CD8-positive, alpha-beta memory T cell (primary cell): ENCODE measurements at regions of chr11 and their contacts with region 1.

Region 1: DNA sequence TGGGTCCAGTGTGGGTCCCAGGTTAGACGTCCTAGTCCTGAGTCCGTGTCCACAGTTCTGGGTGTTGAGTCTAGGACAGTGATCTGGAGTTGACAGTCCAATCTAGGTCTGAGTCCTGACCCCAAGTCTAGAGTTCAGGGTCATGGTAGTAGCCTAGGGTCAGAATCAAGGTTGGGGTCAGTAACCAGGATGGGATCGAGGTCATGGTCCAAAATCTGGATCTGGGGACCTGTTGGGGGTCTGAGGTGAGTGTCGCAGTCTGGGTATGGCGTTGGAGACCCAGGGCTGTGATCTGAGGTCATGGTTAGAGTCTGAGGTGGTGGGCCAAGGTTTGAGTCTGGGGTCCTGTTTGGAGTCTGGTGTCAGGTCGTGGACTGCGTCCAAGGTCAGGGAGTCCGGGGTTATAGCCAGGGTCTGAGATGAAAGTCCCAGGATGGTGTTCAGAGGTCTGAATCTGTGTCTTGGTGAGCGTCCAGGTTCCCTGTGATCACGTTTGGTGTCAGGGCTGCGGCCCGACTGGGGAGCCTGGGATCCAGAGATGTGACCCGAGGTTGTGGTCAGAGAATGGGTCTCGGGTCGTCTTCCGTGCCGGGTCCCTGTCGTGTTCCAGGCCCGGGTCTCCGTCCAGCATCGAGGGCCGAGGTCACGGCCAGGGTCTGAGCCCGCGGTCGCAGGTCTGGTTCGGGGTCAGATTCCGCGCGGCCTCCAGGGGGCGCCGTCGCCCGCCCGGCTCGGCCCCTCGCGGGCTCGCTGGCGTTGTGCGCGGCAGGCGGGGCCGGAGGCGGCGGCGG is 445 bp upstream of the GRK2 start:
- DNase-seq: peak; percentile 69 to 80 (median 75)
- H3K4me3 ChIP-seq: no peak overlapping the region
- H3K4me3 Mint-ChIP-seq: peak overlapping the region; percentile 80 to 95 (median 85)
- H3K27ac ChIP-seq: peak overlapping the region; percentile 17
- H3K27ac Mint-ChIP-seq: peak overlapping the region; percentile 80 to 93 (median 88)
- H3K4me1 ChIP-seq: peaks cover 63% of the 10 kb centered on the region
- H3K4me1 Mint-ChIP-seq: peaks cover 53 to 82% (median 65%) of the 10 kb centered on the region in 3 donors
- H3K27me3 ChIP-seq: no peaks in the 10 kb centered on the region
- H3K27me3 Mint-ChIP-seq: peaks cover 3 to 8% of the 10 kb centered on the region in 2 donors

Region 2: GRCh38 chr11:66906061-66906735 is 359.6 kb before region 1 on chr11:
- CTCF ChIA-PET with region 1: no interaction called
- POLR2A ChIA-PET with region 1: no interaction called
- DNase-seq: peak in 1 of 5 donors; percentile 25
- H3K4me3 ChIP-seq: no peak overlapping the region
- H3K4me3 Mint-ChIP-seq: no peak overlapping the region
- H3K27ac ChIP-seq: no peak overlapping the region
- H3K27ac Mint-ChIP-seq: peak overlapping the region in 1 of 8 donors; percentile 51
- H3K4me1 ChIP-seq: no peaks in the 10 kb centered on the region
- H3K4me1 Mint-ChIP-seq: no peaks in the 10 kb centered on the region
- H3K27me3 ChIP-seq: no peaks in the 10 kb centered on the region
- H3K27me3 Mint-ChIP-seq: peaks cover 5 to 17% of the 10 kb centered on the region in 2 donors

Region 3: DNA sequence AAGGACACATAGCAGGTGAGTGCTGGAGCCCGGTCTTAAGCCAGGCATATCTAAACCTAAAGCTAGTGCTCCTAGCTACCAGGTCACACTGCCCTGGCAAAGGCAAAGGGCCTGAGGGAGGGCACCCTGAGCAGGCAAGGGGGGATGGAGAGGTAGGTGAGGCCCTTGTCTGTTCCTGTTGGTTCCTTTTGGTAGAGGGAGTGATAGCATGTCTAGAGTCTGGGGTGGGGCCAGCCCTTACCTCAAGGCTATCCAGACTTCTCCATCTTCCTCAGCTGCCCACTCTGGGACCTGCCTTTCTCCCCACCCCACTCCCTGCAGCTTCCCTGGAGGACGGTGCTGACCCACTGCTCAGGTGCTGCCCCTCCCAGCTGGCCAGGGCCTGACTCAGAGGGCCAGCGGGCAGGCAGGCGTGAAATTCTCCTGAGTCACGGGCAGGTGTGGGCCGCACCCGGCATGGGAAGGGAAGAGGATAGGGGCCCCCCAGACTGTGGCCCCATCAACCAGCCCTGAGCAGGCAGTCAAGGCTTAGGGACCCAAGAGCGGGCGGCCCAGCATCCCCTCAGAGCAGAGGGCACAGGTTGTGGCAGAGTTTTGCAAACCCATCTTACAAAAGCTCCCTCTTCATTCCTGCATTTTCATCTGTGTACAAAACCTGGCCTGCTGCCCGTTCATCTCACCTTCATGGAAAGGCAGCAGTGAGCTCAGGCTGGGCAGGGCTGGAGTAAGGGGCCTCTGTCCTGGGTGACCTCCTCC is 203.3 kb before region 1 on chr11:
- CTCF ChIA-PET with region 1: no interaction called
- POLR2A ChIA-PET with region 1: no interaction called
- DNase-seq: no peak
- H3K4me3 ChIP-seq: no peak overlapping the region
- H3K4me3 Mint-ChIP-seq: no peak overlapping the region
- H3K27ac ChIP-seq: no peak overlapping the region
- H3K27ac Mint-ChIP-seq: no peak overlapping the region
- H3K4me1 ChIP-seq: no peaks in the 10 kb centered on the region
- H3K4me1 Mint-ChIP-seq: no peaks in the 10 kb centered on the region
- H3K27me3 ChIP-seq: no peaks in the 10 kb centered on the region
- H3K27me3 Mint-ChIP-seq: peaks cover 0 to 2% of the 10 kb centered on the region in 2 donors

Region 4: DNA sequence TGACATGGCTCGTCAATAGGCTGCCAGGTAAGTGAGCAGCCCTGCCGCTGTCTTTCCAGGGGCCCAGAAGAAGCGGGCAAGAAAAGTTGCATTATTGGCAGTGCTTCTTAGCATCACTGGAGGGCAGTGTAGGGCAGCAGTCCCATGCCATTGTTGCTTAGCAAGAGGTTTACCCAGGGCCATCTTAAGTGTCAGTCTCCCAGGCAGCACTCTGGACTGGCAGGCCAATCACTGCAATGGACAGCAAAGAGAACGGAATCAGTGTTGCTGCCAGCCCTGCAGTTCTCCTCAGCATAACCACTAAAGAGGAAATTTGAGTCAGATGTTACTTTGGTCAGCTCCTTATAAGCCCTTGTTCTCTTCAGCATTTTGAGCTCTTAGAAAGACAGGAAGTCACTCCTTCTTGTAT is 13.0 kb before region 1 on chr11:
- CTCF ChIA-PET with region 1: interaction called, 24 read pairs
- POLR2A ChIA-PET with region 1: no interaction called
- DNase-seq: peak in 1 of 5 donors; percentile 46
- H3K4me3 ChIP-seq: no peak overlapping the region
- H3K4me3 Mint-ChIP-seq: peak overlapping the region in 1 of 7 donors; percentile 41
- H3K27ac ChIP-seq: no peak overlapping the region
- H3K27ac Mint-ChIP-seq: peak overlapping the region in 7 of 8 donors; percentile 11 to 76 (median 67)
- H3K4me1 ChIP-seq: peaks cover 20% of the 10 kb centered on the region
- H3K4me1 Mint-ChIP-seq: peaks cover 13 to 58% (median 34%) of the 10 kb centered on the region in 3 donors
- H3K27me3 ChIP-seq: no peaks in the 10 kb centered on the region
- H3K27me3 Mint-ChIP-seq: peaks cover 0 to 4% of the 10 kb centered on the region in 2 donors

Region 5: GRCh38 chr11:67283481-67283963 is 17.7 kb after region 1 on chr11:
- CTCF ChIA-PET with region 1: interaction called, 114 read pairs
- POLR2A ChIA-PET with region 1: interaction called, 283 read pairs
- DNase-seq: no peak
- H3K4me3 ChIP-seq: no peak overlapping the region
- H3K4me3 Mint-ChIP-seq: no peak overlapping the region
- H3K27ac ChIP-seq: no peak overlapping the region
- H3K27ac Mint-ChIP-seq: peak overlapping the region in 5 of 8 donors; percentile 54 to 97 (median 63)
- H3K4me1 ChIP-seq: peaks cover 72% of the 10 kb centered on the region
- H3K4me1 Mint-ChIP-seq: peaks cover 41 to 60% (median 43%) of the 10 kb centered on the region in 3 donors
- H3K27me3 ChIP-seq: no peaks in the 10 kb centered on the region
- H3K27me3 Mint-ChIP-seq: peaks cover 0 to 2% of the 10 kb centered on the region in 2 donors

Region 6: DNA sequence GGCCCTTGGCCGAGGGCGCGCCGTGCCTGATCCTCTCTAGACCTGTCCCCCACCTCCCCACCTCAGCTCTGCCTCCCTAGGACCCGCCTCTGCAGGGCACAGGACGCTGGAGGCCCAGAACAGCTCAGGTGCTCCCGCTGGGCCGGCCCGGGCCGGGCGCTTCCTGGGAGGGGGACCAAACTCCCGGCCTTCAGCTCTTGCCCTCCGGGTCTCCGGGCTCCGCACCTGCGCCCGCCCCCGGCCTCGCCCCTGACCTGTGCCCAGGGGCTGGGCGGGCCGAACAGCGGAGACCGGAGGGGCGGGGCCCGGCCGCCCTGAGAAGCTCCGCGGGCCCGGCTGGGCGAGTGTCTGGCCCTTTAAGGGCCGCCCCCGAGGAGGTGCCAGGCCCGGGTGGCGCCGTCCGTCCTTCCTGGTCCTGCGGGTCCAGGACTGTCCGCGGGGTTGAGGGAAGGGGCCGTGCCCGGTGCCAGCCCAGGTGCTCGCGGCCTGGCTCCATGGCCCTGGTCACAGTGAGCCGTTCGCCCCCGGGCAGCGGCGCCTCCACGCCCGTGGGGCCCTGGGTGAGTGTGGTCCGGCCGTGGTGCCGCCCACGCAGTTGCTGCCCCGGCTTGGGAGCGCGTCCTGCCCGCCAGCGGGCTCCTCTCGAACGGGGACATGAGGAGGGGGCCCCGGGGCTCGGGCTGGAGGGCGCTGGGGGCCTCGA is 37.5 kb after region 1 on chr11 and contains the start of gene SSH3:
- CTCF ChIA-PET with region 1: interaction called, 10 read pairs
- POLR2A ChIA-PET with region 1: interaction called, 8 read pairs
- DNase-seq: peak in 4 of 5 donors; percentile 24 to 67 (median 43)
- H3K4me3 ChIP-seq: peak within 1 kb of the TSS; percentile 45
- H3K4me3 Mint-ChIP-seq: peak within 1 kb of the TSS; percentile 61 to 86 (median 68)
- H3K27ac ChIP-seq: no peak within 1 kb of the TSS
- H3K27ac Mint-ChIP-seq: peak within 1 kb of the TSS in 7 of 8 donors; percentile 42 to 86 (median 74)
- H3K4me1 ChIP-seq: peaks cover 14% of the 10 kb centered on the region
- H3K4me1 Mint-ChIP-seq: peaks cover 10 to 30% (median 11%) of the 10 kb centered on the region in 3 donors
- H3K27me3 ChIP-seq: no peaks in the 10 kb centered on the region
- H3K27me3 Mint-ChIP-seq: no peaks in the 10 kb centered on the region
- total RNA-seq, gene SSH3: 8.4 to 10.6 TPM

Region 7: DNA sequence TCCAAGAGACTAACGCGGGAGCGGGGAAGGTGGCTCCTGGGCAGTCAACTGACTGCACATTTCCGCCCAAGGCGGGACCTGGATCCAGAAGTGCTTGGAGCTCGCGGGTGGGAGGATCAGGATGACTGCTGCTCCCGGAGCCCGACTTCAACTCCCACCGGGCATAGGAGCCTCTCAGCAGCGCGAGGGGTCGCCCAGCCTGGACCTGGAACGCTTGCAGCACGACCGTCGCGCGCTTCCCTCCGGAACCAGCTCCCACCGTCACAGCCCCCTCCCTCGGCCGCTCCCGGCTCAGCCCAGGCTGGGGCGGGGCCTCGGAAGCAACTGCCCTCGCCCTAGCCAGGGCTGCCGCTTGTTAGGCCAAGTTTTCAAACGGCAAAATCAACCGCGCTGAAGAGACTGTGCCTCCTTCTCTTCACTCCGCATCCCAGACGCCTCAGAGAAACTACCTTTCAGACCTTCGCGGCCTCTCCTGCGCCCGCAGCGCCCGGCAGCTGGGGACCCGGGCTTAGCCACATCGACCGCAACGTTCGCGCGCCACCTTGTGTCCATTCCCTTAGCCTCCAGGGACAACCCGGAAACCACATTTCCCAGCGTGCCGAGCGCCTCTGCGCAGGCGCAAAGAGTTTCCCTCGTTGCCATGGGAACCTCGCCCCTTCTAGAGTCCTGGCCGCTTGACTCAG is 51.5 kb after region 1 on chr11:
- CTCF ChIA-PET with region 1: interaction called, 94 read pairs
- POLR2A ChIA-PET with region 1: interaction called, 24 read pairs
- DNase-seq: peak; percentile 95 to 99 (median 97)
- H3K4me3 ChIP-seq: peak overlapping the region; percentile 93
- H3K4me3 Mint-ChIP-seq: peak overlapping the region; percentile 94 to 100 (median 96)
- H3K27ac ChIP-seq: peak overlapping the region; percentile 82
- H3K27ac Mint-ChIP-seq: peak overlapping the region; percentile 84 to 98 (median 96)
- H3K4me1 ChIP-seq: peaks cover 20% of the 10 kb centered on the region
- H3K4me1 Mint-ChIP-seq: peaks cover 29 to 48% (median 42%) of the 10 kb centered on the region in 3 donors
- H3K27me3 ChIP-seq: no peaks in the 10 kb centered on the region
- H3K27me3 Mint-ChIP-seq: peaks cover 0 to 6% of the 10 kb centered on the region in 2 donors

Region 8: DNA sequence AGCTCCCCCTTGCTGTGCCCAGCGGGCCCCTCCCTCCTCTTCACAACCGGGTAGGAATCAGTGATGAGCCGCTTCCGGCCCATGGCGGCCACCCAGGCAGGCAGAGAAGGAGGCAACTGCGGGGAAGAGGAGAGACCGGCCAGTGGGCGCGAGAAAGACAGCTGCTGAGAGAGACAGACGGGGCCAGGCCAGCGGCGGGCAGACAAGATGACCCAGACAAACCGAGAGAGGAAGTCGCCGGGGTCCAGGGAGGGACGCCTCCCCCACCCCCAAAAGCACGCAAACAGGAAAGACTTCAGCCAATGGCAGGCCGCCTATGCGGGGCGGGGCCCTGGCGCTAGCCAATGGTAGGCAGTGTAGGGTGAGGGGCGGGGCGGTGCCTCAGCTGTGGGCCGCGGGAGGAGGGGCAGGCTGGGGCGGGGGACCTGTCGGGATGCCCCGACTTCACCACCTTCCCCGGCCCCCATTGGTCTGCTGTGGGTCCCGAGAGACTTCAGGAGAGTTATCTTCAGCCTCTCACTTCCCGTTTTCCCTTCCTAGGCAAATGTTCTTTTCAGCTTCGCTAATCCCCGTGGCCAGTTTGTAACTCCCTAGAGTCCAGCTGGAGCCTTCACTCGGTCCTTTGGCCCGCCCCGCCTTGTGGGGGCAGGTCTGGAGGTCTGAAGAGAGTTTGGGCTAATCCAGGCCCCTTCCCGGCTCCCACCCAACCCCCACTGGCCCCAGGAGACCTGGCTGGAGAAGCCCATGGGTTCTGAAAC is 87.7 kb after region 1 on chr11 and contains the start of gene POLD4:
- CTCF ChIA-PET with region 1: interaction called, 24 read pairs
- POLR2A ChIA-PET with region 1: interaction called, 4 read pairs
- DNase-seq: peak; percentile 92 to 97 (median 96)
- H3K4me3 ChIP-seq: peak within 1 kb of the TSS; percentile 96
- H3K4me3 Mint-ChIP-seq: peak within 1 kb of the TSS; percentile 92 to 98 (median 95)
- H3K27ac ChIP-seq: peak within 1 kb of the TSS; percentile 96
- H3K27ac Mint-ChIP-seq: peak within 1 kb of the TSS; percentile 97 to 99 (median 98)
- H3K4me1 ChIP-seq: peaks cover 50% of the 10 kb centered on the region
- H3K4me1 Mint-ChIP-seq: peaks cover 35 to 69% (median 55%) of the 10 kb centered on the region in 3 donors
- H3K27me3 ChIP-seq: no peaks in the 10 kb centered on the region
- H3K27me3 Mint-ChIP-seq: no peaks in the 10 kb centered on the region
- total RNA-seq, gene POLD4: 32.3 to 37.8 TPM